ENCODE measurements at regions of chr5 and their contacts with region 1.

Region 1: DNA sequence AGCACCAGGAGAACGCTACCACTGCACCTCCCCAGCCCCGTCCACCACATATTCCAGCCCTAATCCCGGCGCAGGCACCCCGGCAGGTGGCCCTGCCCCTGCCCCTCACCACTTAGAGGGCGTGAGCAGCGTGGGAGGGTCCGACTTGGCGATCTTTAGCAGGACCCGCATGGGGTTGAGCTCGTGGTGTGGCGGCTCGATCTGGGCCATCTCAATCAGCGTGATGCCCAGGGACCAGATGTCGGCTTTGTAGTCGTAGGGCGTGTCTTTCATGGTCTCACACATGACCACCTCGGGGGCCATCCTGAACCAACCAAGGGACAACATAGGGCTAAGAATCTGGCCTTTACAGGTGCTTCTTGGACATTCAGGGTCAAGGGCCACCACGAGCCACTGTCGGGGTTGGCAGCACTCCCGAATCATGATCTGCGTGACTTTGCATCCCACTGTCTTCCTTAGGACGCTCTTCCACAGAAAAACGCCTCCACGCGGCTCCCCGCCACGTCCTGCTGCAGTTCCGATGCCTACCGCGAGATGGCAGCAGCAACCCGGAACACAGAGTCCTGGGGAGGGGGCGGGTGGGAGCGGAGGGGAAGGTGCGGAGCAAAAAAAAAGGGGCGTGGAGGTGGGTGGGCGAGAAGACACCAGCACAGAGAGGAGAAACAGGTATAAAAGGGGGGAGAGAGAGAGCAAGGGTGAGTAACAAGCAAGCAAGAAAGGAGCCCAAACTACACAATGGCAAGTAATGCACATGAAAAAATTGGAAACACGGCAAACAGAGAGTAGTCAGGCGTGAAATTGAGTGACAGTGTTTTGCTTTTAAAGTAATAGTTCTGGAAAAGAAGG is 81.3 kb downstream of the STK10 start:
- DNase-seq: peak; percentile 52 to 56
- H3K4me3 ChIP-seq: peak overlapping the region in 1 of 3 donors; percentile 10
- H3K27ac ChIP-seq: no peak overlapping the region
- H3K4me1 ChIP-seq: peaks cover 4 to 31% of the 10 kb centered on the region in 2 donors
- H3K27me3 ChIP-seq: no peaks in the 10 kb centered on the region
- CTCF ChIP-seq: peak; percentile 69 to 99 (median 83)
- POLR2A ChIP-seq: no peak

Region 2: GRCh38 chr5:171757853-171758535 is 348.7 kb before region 1 on chr5:
- intact Hi-C with region 1: no loop called
- DNase-seq: no peak
- H3K4me3 ChIP-seq: no peak overlapping the region
- H3K27ac ChIP-seq: no peak overlapping the region
- H3K4me1 ChIP-seq: no peaks in the 10 kb centered on the region
- H3K27me3 ChIP-seq: no peaks in the 10 kb centered on the region
- CTCF ChIP-seq: no peak
- POLR2A ChIP-seq: no peak

Region 3: GRCh38 chr5:172188033-172188892 is 81.5 kb after region 1 on chr5 and contains the start of gene STK10:
- intact Hi-C with region 1: loop called (anchors 5 kb)
- DNase-seq: peak; percentile 89
- H3K4me3 ChIP-seq: peak within 1 kb of the TSS; percentile 70 to 100 (median 81)
- H3K27ac ChIP-seq: peak within 1 kb of the TSS; percentile 64 to 82 (median 74)
- H3K4me1 ChIP-seq: peaks cover 0 to 7% of the 10 kb centered on the region in 2 donors
- H3K27me3 ChIP-seq: no peaks in the 10 kb centered on the region
- CTCF ChIP-seq: peak; percentile 59 to 88 (median 62)
- POLR2A ChIP-seq: peak in 1 of 2 donors; percentile 52
- total RNA-seq, gene STK10: 5.5 to 11.6 (median 8.6) TPM

Region 4: GRCh38 chr5:172293054-172293744 is 186.5 kb after region 1 on chr5:
- intact Hi-C with region 1: loop called (anchors 5 kb)
- DNase-seq: peak; percentile 84 to 86
- H3K4me3 ChIP-seq: no peak overlapping the region
- H3K27ac ChIP-seq: no peak overlapping the region
- H3K4me1 ChIP-seq: peaks cover 0 to 5% of the 10 kb centered on the region in 2 donors
- H3K27me3 ChIP-seq: no peaks in the 10 kb centered on the region
- CTCF ChIP-seq: peak; percentile 38 to 95 (median 84)
- POLR2A ChIP-seq: no peak

Region 5: DNA sequence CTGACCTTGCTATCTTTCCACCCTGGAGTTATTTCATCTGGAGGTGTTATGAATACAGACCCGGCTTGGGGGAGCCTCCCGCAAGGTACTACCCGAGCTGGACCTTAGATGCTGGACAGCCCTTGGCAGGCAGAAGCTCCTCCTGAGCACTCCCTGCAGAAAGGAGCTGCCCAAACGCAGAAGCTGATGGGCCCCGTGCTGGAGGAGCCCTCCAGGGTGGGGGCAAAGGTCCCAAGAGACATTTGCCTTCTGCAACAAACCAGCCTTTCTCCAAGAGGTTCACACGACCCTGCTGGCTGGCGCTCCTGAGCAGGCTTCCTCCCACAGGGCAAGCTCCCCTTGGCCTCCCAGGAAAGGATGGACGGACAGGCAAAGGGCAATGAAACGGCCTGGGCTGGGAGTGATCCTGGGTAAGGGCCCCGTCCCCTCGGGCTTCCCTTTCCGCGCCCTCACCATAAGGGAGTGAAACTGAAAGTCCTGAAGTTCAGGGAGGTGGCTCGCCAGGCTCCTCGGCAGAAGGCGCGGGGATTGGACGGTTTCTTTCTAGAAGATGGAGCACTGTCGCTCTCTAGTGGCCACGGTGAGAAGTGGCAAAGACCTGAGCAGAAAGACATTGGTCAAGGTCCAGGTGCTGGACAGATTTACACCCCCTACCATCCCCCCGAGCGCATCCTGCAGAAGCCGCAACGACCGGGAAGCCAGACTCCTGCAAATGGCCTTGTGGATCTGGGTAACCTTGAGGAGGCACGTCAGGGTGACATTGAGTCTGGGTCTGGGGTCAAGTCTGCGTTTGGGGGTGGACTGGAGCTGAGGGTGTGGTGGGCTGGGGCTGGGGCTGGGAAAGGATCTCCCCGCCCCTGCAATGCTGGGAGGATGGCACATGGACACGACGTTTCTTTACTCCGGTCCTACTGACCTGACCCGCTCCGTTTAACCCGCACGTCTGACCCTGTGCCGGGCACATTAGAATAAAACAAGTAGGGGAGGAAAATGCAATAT is 590.7 kb after region 1 on chr5:
- intact Hi-C with region 1: loop called (anchors 10 kb)
- DNase-seq: peak; percentile 87 to 90
- H3K4me3 ChIP-seq: peak overlapping the region in 2 of 3 donors; percentile 52 to 57
- H3K27ac ChIP-seq: peak overlapping the region; percentile 30 to 58 (median 58)
- H3K4me1 ChIP-seq: peaks cover 0 to 22% of the 10 kb centered on the region in 2 donors
- H3K27me3 ChIP-seq: no peaks in the 10 kb centered on the region
- CTCF ChIP-seq: peak; percentile 85 to 91 (median 90)
- POLR2A ChIP-seq: peak in 1 of 2 donors; percentile 35

Measured in thyroid gland (tissue), 4 donors.